AG04450 (cell line): ENCODE measurements at regions of chr12 and their contacts with region 1.

Region 1: GRCh38 chr12:91098941-91099340 is 12.4 kb downstream of the LUM start:
- DNase-seq: peak; percentile 78
- H3K4me3 ChIP-seq: no peak overlapping the region
- H3K27ac ChIP-seq: no peak overlapping the region
- H3K27me3 ChIP-seq: no peaks in the 10 kb centered on the region
- CTCF ChIP-seq: no peak

Region 2: GRCh38 chr12:91109148-91109564 is 10.2 kb after region 1 on chr12:
- CTCF ChIA-PET with region 1: interaction called, 21 read pairs
- POLR2A ChIA-PET with region 1: interaction called, 4 read pairs
- DNase-seq: no peak
- H3K4me3 ChIP-seq: peak overlapping the region; percentile 56
- H3K27ac ChIP-seq: no peak overlapping the region
- H3K27me3 ChIP-seq: no peaks in the 10 kb centered on the region
- CTCF ChIP-seq: peak; percentile 71